K562 (cell line): ENCODE measurements at regions of chr6 and their contacts with region 1.

Region 1: GRCh38 chr6:106309766-106310373 is 15.7 kb downstream of the ATG5 start:
- DNase-seq: no peak
- ATAC-seq: no peak
- H3K4me3 ChIP-seq: no peak overlapping the region
- H3K27ac ChIP-seq: no peak overlapping the region
- H3K4me1 ChIP-seq: peaks cover 14 to 39% of the 10 kb centered on the region in 2 experiments
- H3K27me3 ChIP-seq: no peaks in the 10 kb centered on the region
- CTCF ChIP-seq: no peak
- EP300 ChIP-seq: no peak
- POLR2A ChIP-seq: no peak
- RAD21 ChIP-seq: no peak

Region 2: DNA sequence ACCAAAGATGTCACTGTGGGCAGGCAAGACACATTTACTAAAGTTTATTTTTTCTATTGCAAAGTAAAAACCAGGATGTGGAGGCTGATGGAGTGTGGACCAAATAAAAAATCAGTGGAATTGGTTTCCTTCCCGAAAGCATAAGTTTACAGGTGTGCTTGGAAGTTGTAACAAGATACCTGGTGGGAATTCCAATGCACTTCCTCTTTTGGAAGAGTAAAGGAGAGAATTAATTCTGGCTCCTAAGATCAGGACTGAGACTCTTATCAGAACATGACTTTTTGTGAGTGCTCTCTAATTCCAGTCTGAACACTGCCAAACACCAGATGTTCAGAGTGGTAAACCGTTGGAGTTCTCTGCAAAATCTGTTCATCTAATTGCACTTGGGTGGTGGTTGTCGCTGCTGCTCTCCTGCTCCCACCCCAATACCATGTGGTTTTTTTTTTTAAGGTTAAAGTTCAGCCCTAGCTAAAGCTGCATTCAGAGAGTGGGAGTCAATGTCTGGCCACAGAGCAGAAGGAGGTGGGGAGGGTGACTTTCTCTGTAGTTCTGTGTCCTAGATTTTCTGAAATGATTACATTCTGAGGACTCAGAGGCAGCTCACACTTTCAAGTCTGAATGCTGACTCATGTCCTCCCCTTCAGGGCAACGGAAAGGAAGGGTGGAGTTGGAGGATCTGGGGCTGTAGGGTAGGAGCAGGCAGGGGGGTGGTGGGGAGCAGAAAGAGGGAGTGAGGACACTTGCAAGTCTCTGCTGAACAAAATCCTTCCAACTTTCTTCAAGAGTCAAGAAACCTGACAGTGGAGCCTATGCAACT is 499.6 kb before region 1 on chr6:
- CTCF ChIA-PET with region 1: no interaction called
- POLR2A ChIA-PET with region 1: no interaction called
- in situ Hi-C with region 1: no loop called
- intact Hi-C with region 1: loop called (anchors 10 kb)
- DNase-seq: peak; percentile 82 to 96 (median 86)
- ATAC-seq: peak; percentile 95
- H3K4me3 ChIP-seq: no peak overlapping the region
- H3K27ac ChIP-seq: peak overlapping the region; percentile 86
- H3K4me1 ChIP-seq: peaks cover 23 to 70% of the 10 kb centered on the region in 2 experiments
- H3K27me3 ChIP-seq: no peaks in the 10 kb centered on the region
- CTCF ChIP-seq: no peak
- EP300 ChIP-seq: peak; percentile 88
- POLR2A ChIP-seq: peak; percentile 67
- RAD21 ChIP-seq: no peak; a peak in 1 of 4 replicates

Region 3: GRCh38 chr6:106194949-106195921 is 114.6 kb before region 1 on chr6:
- CTCF ChIA-PET with region 1: no interaction called
- POLR2A ChIA-PET with region 1: no interaction called
- in situ Hi-C with region 1: no loop called
- intact Hi-C with region 1: no loop called
- DNase-seq: no peak
- ATAC-seq: no peak
- H3K4me3 ChIP-seq: no peak overlapping the region
- H3K27ac ChIP-seq: no peak overlapping the region
- H3K4me1 ChIP-seq: no peaks in the 10 kb centered on the region; a peak in 1 of 5 replicates
- H3K27me3 ChIP-seq: no peaks in the 10 kb centered on the region
- CTCF ChIP-seq: no peak
- EP300 ChIP-seq: no peak
- POLR2A ChIP-seq: no peak
- RAD21 ChIP-seq: no peak

Region 4: GRCh38 chr6:106325336-106326178 is 15.7 kb after region 1 on chr6 and contains the start of gene ATG5:
- CTCF ChIA-PET with region 1: no interaction called
- POLR2A ChIA-PET with region 1: interaction called, 10 read pairs
- in situ Hi-C with region 1: no loop called
- intact Hi-C with region 1: loop called (anchors 1 kb)
- DNase-seq: peak; percentile 97 to 99 (median 98)
- ATAC-seq: peak; percentile 98
- H3K4me3 ChIP-seq: peak within 1 kb of the TSS; percentile 86
- H3K27ac ChIP-seq: peak within 1 kb of the TSS; percentile 93
- H3K4me1 ChIP-seq: peaks cover 7 to 15% of the 10 kb centered on the region in 2 experiments; a peak in 4 of 5 replicates
- H3K27me3 ChIP-seq: no peaks in the 10 kb centered on the region
- CTCF ChIP-seq: 0 out of 6 replicates have a peak, but pooled peaks of 1 of the 3 experiments have one; percentile 6
- EP300 ChIP-seq: peak; percentile 21
- POLR2A ChIP-seq: peak; percentile 94
- RAD21 ChIP-seq: no peak
- polyA plus RNA-seq, gene ATG5: 29.0 to 29.6 TPM